Heart left ventricle (tissue), 16 donors: ENCODE measurements at regions of chr5 and their contacts with region 1.

Region 1: GRCh38 chr5:169116961-169117461 is 183.9 kb downstream of the SLIT3 start:
- DNase-seq: peak in 2 of 5 donors; percentile 16 to 30
- ATAC-seq: peak; percentile 46 to 85 (median 78)
- H3K4me3 ChIP-seq: no peak overlapping the region
- H3K27ac ChIP-seq: peak overlapping the region in 2 of 12 donors; percentile 2 to 28
- H3K4me1 ChIP-seq: peaks cover 0 to 12% (median 3%) of the 10 kb centered on the region in 12 donors
- H3K27me3 ChIP-seq: no peaks in the 10 kb centered on the region
- CTCF ChIP-seq: peak in 6 of 12 donors; percentile 5 to 38 (median 22)
- POLR2A ChIP-seq: no peak

Region 2: GRCh38 chr5:168268949-168269943 is 847.8 kb before region 1 on chr5:
- intact Hi-C with region 1: no loop called
- DNase-seq: peak; percentile 75 to 89 (median 83)
- ATAC-seq: peak; percentile 84 to 88 (median 86)
- H3K4me3 ChIP-seq: peak overlapping the region in 10 of 12 donors; percentile 26 to 50 (median 42)
- H3K27ac ChIP-seq: no peak overlapping the region
- H3K4me1 ChIP-seq: peaks cover 0 to 17% (median 13%) of the 10 kb centered on the region in 12 donors
- H3K27me3 ChIP-seq: peaks cover 0 to 6% (median 0%) of the 10 kb centered on the region in 9 donors
- CTCF ChIP-seq: peak; percentile 66 to 97 (median 86)
- POLR2A ChIP-seq: no peak

Region 3: DNA sequence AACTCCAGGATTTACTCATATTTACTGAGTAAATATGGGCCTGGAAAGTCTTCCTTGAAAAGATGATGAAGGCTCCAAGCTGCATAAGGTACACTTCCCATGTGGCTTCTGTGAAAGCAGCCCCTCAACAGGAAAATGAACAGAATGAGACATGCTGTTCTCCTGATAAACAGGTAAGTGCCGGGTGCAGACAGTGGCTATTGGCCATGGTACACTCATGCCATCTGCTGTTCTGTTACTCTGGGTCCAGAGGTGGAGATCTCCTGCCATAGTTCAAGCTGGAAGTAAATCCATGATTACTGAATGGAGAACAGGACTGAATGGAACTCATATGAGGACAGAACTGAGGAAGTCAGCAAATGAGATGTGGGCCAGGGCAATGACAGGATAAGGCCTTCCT is 80.3 kb after region 1 on chr5:
- intact Hi-C with region 1: loop called in 2 of 10 experiments (anchors 5 to 10 kb)
- DNase-seq: peak in 3 of 5 donors; percentile 14 to 35 (median 27)
- ATAC-seq: peak; percentile 42 to 77 (median 74)
- H3K4me3 ChIP-seq: no peak overlapping the region
- H3K27ac ChIP-seq: no peak overlapping the region
- H3K4me1 ChIP-seq: no peaks in the 10 kb centered on the region
- H3K27me3 ChIP-seq: no peaks in the 10 kb centered on the region
- CTCF ChIP-seq: peak in 11 of 12 donors; percentile 25 to 55 (median 41)
- POLR2A ChIP-seq: no peak

Region 4: GRCh38 chr5:169302491-169303118 is 185.6 kb after region 1 on chr5:
- intact Hi-C with region 1: loop called in 5 of 10 experiments (anchors 5 to 10 kb)
- DNase-seq: peak; percentile 58 to 76 (median 65)
- ATAC-seq: peak in 3 of 4 donors; percentile 30 to 62 (median 53)
- H3K4me3 ChIP-seq: no peak overlapping the region
- H3K27ac ChIP-seq: no peak overlapping the region
- H3K4me1 ChIP-seq: peaks cover 0 to 34% (median 7%) of the 10 kb centered on the region in 12 donors
- H3K27me3 ChIP-seq: peaks cover 0 to 48% (median 24%) of the 10 kb centered on the region in 9 donors
- CTCF ChIP-seq: peak; percentile 77 to 92 (median 88)
- POLR2A ChIP-seq: no peak

Region 5: GRCh38 chr5:169548315-169548714 is 431.3 kb after region 1 on chr5:
- intact Hi-C with region 1: loop called in 2 of 10 experiments (anchors 10 kb)
- DNase-seq: no peak
- ATAC-seq: peak in 3 of 4 donors; percentile 74 to 87 (median 79)
- H3K4me3 ChIP-seq: no peak overlapping the region
- H3K27ac ChIP-seq: no peak overlapping the region
- H3K4me1 ChIP-seq: no peaks in the 10 kb centered on the region
- H3K27me3 ChIP-seq: peaks cover 0 to 29% (median 6%) of the 10 kb centered on the region in 9 donors
- CTCF ChIP-seq: peak in 11 of 12 donors; percentile 18 to 61 (median 50)
- POLR2A ChIP-seq: no peak